Activated CD4-positive, alpha-beta T cell treated with anti-CD3 and anti-CD28 coated beads for 36 hours (primary cell): ENCODE measurements at regions of chr9 and their contacts with region 1.

Region 1: GRCh38 chr9:97921959-97922724 is at the start of gene TRMO:
- DNase-seq: peak; percentile 99
- ATAC-seq: peak; percentile 78
- H3K4me3 Mint-ChIP-seq: peak within 1 kb of the TSS; percentile 82
- H3K27ac Mint-ChIP-seq: peak within 1 kb of the TSS; percentile 99
- H3K4me1 Mint-ChIP-seq: peaks cover 36% of the 10 kb centered on the region
- H3K27me3 Mint-ChIP-seq: no peaks in the 10 kb centered on the region
- total RNA-seq, gene TRMO: 13.9 to 20.7 TPM

Region 2: GRCh38 chr9:97632985-97633858 is 288.9 kb before region 1 on chr9 and contains the starts of genes NCBP1 and TSTD2:
- CTCF ChIA-PET with region 1: interaction called, 5 read pairs
- POLR2A ChIA-PET with region 1: interaction called, 5 read pairs
- intact Hi-C with region 1: loop called (anchors 1 kb)
- DNase-seq: peak; percentile 98
- ATAC-seq: peak; percentile 91
- H3K4me3 Mint-ChIP-seq: peak within 1 kb of the TSS; percentile 92
- H3K27ac Mint-ChIP-seq: peak within 1 kb of the TSS; percentile 99
- H3K4me1 Mint-ChIP-seq: peaks cover 48% of the 10 kb centered on the region
- H3K27me3 Mint-ChIP-seq: no peaks in the 10 kb centered on the region
- total RNA-seq, gene NCBP1: 42.2 to 43.0 TPM
- total RNA-seq, gene TSTD2: 12.7 to 15.0 TPM

Region 3: GRCh38 chr9:97857606-97858392 is 64.3 kb before region 1 on chr9:
- CTCF ChIA-PET with region 1: no interaction called
- POLR2A ChIA-PET with region 1: no interaction called
- intact Hi-C with region 1: no loop called
- DNase-seq: peak; percentile 37
- ATAC-seq: no peak
- H3K4me3 Mint-ChIP-seq: no peak overlapping the region
- H3K27ac Mint-ChIP-seq: no peak overlapping the region
- H3K4me1 Mint-ChIP-seq: peaks cover 12% of the 10 kb centered on the region
- H3K27me3 Mint-ChIP-seq: peaks cover 75% of the 10 kb centered on the region

Region 4: DNA sequence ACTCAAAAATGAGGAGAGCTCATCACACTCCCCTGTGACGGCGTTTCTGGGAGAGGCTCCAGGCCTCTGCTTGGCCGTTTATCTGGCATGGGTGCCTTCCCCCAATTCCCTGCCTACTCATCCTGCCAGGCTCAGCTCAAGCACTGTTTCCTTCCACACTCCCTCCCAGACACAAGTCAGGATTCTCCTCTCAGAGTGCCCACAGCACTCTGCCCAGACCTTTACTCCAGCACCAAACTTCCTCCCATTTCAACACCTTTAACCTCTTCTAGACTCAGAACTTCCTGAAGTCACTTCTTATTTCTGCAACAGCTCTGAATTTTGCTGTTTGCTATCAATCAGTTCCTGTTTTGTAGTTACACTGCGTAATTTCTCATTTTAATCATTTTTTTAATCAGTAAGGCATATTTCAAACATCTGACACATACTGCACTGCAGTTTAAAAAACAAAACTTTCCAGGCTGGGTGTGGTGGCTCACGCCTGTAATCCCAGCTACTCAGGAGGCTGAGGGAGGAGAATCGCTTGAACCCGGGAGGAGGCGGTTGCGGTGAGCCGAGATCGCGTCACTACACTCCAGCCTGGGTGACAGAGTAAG is 15.8 kb before region 1 on chr9:
- CTCF ChIA-PET with region 1: interaction called, 74 read pairs
- POLR2A ChIA-PET with region 1: interaction called, 8 read pairs
- intact Hi-C with region 1: loop called (anchors 1 to 2 kb)
- DNase-seq: peak; percentile 62
- ATAC-seq: peak; percentile 43
- H3K4me3 Mint-ChIP-seq: peak overlapping the region; percentile 58
- H3K27ac Mint-ChIP-seq: peak overlapping the region; percentile 95
- H3K4me1 Mint-ChIP-seq: peaks cover 76% of the 10 kb centered on the region
- H3K27me3 Mint-ChIP-seq: no peaks in the 10 kb centered on the region

Region 5: DNA sequence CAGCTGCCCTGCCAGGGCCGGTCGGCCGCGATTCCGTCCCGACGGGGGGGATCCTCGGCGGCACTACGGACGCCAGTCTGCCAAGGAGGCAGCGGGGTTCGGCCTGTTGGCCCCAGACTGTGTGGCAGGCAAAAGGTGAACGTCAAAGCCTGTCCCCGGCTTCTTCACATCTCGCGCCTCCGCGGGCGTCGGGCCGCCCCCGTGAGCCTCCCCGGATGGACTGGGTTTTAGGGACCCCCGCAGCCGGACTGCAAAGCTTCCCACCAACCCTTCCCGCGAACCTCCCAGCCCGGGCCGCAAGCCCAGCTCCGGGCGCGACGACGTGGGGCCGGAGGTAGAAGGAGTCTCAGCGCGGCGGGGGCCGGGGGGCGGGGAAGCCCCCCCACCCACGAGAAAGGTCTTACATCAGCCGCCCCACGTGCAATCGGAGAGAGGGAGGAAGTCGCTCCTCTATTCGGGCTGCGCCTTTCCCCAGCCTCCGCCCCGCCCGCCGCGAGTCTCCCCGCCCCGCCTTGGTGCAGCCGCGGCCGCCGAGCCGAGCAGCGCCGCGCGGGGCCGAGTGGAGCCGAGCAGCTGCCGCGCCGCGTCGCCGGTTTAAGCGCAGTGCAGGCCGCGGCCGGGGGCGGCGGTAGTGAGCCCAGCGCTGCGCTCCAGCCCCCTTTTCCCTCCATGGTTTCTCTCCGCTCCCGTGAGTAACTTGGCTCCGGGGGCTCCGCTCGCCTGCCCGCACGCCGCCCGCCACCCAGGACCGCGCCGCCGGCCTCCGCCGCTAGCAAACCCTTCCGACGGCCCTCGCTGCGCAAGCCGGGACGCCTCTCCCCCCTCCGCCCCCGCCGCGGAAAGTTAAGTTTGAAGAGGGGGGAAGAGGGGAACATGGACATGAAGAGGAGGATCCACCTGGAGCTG is 60.8 kb after region 1 on chr9 and contains the start of gene ANP32B:
- CTCF ChIA-PET with region 1: interaction called, 32 read pairs
- POLR2A ChIA-PET with region 1: interaction called, 11 read pairs
- intact Hi-C with region 1: loop called (anchors 1 kb)
- DNase-seq: peak; percentile 98
- ATAC-seq: peak; percentile 89
- H3K4me3 Mint-ChIP-seq: peak within 1 kb of the TSS; percentile 81
- H3K27ac Mint-ChIP-seq: peak within 1 kb of the TSS; percentile 92
- H3K4me1 Mint-ChIP-seq: peaks cover 49% of the 10 kb centered on the region
- H3K27me3 Mint-ChIP-seq: no peaks in the 10 kb centered on the region
- total RNA-seq, gene ANP32B: 367 to 440 TPM

Region 6: GRCh38 chr9:98101868-98102273 is 179.7 kb after region 1 on chr9:
- CTCF ChIA-PET with region 1: interaction called, 3 read pairs
- POLR2A ChIA-PET with region 1: no interaction called
- intact Hi-C with region 1: loop called in 1 of 2 experiments (anchors 1 kb)
- DNase-seq: peak; percentile 86
- ATAC-seq: peak; percentile 96
- H3K4me3 Mint-ChIP-seq: peak overlapping the region; percentile 49
- H3K27ac Mint-ChIP-seq: peak overlapping the region; percentile 95
- H3K4me1 Mint-ChIP-seq: peaks cover 84% of the 10 kb centered on the region
- H3K27me3 Mint-ChIP-seq: no peaks in the 10 kb centered on the region

Region 7: GRCh38 chr9:98255578-98256296 is 333.6 kb after region 1 on chr9 and contains the start of gene TBC1D2:
- CTCF ChIA-PET with region 1: interaction called, 13 read pairs
- POLR2A ChIA-PET with region 1: interaction called, 4 read pairs
- intact Hi-C with region 1: loop called in 1 of 2 experiments (anchors 1 kb)
- DNase-seq: peak; percentile 99
- ATAC-seq: peak; percentile 87
- H3K4me3 Mint-ChIP-seq: peak within 1 kb of the TSS; percentile 94
- H3K27ac Mint-ChIP-seq: peak within 1 kb of the TSS; percentile 98
- H3K4me1 Mint-ChIP-seq: peaks cover 17% of the 10 kb centered on the region
- H3K27me3 Mint-ChIP-seq: no peaks in the 10 kb centered on the region
- total RNA-seq, gene TBC1D2: 2.8 to 3.2 TPM